ENCODE measurements at regions of chr6 and their contacts with region 1.

Region 1: DNA sequence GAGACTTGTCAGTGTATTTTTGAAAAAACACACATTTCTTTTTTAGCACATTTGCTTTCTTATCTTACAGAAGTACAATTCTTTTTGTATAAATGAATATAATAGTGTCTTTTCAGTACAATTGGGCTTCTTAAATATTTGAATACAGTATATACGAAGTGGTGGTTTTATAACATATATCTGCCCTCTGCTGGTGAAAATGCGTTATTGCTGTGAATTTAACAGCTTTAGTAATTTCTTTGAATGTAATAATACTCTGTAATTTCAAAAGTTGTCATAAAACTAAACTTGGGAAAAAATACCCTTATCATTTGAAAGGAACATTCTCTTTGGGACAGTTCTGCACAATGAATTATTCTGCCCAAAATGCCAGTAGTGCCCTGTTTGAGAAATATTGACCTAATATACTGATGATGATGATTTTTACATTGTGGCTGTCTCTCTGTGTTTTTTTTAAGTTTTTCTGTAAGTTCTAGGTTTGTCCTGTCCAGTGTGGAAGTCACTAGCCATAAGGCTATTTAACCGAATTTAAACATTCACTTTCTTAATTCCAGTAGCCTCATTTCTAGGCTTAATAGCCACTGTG is 19.0 kb downstream of the SMAP1 start:
- DNase-seq: peak; percentile 70
- H3K4me3 Mint-ChIP-seq: no peak overlapping the region
- H3K27ac Mint-ChIP-seq: no peak overlapping the region
- H3K4me1 Mint-ChIP-seq: peaks cover 29% of the 10 kb centered on the region
- H3K27me3 Mint-ChIP-seq: no peaks in the 10 kb centered on the region

Region 2: DNA sequence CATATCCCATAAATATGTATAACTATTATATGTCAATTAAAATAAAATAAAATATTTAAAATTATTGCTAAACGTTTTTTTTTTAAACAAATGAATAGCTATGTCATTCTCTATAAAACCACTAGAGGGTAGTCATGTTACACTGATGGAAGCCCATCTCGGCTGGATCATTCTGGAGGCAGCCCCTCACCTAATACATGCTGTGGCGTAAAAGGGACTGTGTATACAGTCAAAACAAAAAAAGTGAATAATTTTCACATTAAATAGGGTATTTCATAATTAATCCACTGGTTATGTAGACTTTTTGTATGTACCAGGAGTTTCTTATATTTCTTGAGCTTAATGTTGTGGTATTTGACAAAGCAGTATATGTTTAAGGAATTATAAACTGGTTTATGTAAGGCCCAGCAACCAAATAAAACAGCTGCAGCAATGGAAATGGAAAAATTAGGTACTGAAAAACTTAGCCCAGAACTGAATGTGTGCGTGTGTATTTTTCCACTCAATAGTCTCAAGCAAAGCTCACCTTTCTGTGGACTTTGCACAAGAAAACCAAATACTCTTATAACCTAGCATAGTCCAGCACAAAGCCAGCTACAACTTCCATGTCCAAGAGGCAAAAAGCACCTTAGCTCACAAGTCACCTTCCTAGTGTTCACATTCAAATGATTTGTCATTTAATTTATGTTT is 465.5 kb before region 1 on chr6:
- intact Hi-C with region 1: loop called (anchors 5 kb)
- DNase-seq: no peak
- H3K4me3 Mint-ChIP-seq: no peak overlapping the region
- H3K27ac Mint-ChIP-seq: no peak overlapping the region
- H3K4me1 Mint-ChIP-seq: no peaks in the 10 kb centered on the region
- H3K27me3 Mint-ChIP-seq: peaks cover 9% of the 10 kb centered on the region

Region 3: GRCh38 chr6:70369332-70369950 is 317.2 kb before region 1 on chr6:
- intact Hi-C with region 1: loop called (anchors 2 kb)
- DNase-seq: peak; percentile 89
- H3K4me3 Mint-ChIP-seq: no peak overlapping the region
- H3K27ac Mint-ChIP-seq: no peak overlapping the region
- H3K4me1 Mint-ChIP-seq: no peaks in the 10 kb centered on the region
- H3K27me3 Mint-ChIP-seq: peaks cover 37% of the 10 kb centered on the region

Region 4: DNA sequence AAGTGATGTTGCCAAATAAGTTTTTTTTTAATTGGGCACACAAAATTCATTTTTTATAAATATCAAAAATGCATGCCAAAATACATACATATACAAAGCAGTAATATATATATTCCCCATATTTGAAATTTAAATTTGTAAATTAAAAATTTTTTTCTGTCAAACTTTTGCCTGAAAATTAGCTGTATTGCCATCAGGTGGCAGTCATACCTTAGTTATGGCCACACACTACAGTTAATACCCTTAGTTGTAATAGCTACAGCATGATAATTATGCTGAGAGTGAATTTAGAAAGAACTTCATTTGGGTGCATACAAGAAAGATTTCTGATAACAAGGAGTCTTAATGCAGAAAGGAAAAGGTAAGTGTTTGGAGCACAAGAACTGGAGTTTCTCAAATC is 166.1 kb before region 1 on chr6:
- intact Hi-C with region 1: loop called (anchors 1 kb)
- DNase-seq: peak; percentile 68
- H3K4me3 Mint-ChIP-seq: no peak overlapping the region
- H3K27ac Mint-ChIP-seq: no peak overlapping the region
- H3K4me1 Mint-ChIP-seq: peaks cover 4% of the 10 kb centered on the region
- H3K27me3 Mint-ChIP-seq: no peaks in the 10 kb centered on the region

Region 5: DNA sequence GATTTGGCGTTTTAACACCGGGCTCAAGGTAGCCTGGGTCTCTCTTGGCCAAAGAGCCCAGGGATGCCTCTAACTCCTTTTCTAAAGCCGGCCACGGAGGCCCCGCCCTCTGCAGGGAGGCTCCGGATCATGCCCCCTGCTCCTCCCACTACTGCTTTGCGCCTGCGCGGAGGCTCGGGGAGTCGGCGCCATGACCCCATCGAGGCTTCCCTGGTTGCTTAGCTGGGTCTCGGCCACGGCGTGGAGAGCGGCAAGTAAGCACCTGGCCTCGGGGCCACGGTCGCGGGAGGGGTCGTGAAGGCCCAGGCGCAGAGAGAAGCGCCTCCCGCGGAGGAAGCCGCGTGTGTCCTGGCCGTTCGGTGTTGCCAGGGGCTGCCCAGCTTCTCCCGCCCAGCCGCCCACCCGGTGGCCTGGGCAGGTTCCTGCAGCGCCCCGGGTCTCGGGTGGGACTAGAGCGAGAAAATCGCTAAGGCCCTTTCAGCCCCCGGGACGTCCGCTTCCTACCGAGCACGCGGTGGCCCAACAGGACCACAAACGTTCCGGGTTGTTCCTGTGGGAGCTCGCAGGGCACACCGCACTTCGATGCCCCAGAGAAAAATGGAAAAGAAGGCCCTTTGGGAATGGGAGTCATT is 119.8 kb before region 1 on chr6 and contains the start of gene SDHAF4:
- intact Hi-C with region 1: loop called (anchors 5 kb)
- DNase-seq: no peak
- H3K4me3 Mint-ChIP-seq: peak within 1 kb of the TSS; percentile 88
- H3K27ac Mint-ChIP-seq: peak within 1 kb of the TSS; percentile 90
- H3K4me1 Mint-ChIP-seq: peaks cover 11% of the 10 kb centered on the region
- H3K27me3 Mint-ChIP-seq: no peaks in the 10 kb centered on the region
- total RNA-seq, gene SDHAF4: 9.5 and 14.3 TPM in 2 replicates

Measured in activated CD4-positive, alpha-beta T cell treated with anti-CD3 and anti-CD28 coated beads, Interleukin-2, amount 10 ng/mL, durations not matched to agents 24 days and 14 days (primary cell).